OCI-LY7 (cell line): ENCODE measurements at regions of chr4 and their contacts with region 1.

Region 1: DNA sequence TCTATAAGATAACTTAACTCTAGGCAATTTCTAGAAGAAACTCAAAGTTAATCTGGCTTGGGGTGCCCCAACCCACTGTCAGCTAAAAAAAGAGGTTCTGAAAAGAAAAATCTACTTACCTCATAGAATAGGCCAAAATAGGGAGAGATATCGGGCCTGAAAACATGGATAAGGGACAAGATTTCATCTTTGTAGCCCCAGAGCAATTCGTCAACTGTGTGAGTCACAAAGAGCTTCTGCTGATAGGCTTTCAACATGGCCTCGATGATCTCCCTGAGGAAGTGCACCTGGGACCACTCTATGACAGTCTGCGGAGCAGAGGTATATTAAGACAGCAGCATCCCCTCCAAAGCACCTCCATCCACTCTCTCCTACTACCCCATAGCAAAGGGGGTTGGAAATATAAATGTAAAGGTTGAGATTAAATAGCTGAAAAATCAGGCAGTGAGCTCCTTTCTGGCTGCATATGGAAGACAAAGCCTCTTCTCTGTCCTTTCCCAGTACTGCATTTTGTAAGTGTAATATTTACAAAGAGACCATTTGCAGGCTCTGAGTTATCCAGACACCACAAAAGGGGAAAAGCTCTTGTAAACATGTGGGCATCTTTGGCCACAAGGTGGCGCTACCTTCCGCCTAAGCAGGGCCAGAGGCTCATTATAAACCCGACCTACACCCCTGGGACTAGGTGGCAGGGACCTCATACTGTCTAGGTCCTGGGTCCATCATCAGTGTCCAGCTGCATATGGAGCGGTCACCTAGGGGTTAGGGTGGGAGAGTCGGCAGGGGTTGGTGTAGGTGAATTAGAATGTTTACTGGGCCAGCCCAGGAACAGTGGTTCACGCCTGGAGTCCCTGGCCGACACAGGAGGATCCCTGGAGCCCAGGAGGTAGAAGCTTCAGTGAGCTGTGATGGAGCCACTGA is 31.5 kb upstream of the NUP54 start:
- DNase-seq: peak; percentile 80
- H3K4me3 ChIP-seq: no peak overlapping the region
- H3K27ac ChIP-seq: no peak overlapping the region
- H3K4me1 ChIP-seq: no peaks in the 10 kb centered on the region
- CTCF ChIP-seq: peak; percentile 94

Region 2: GRCh38 chr4:75623026-75623425 is 556.6 kb before region 1 on chr4:
- CTCF ChIA-PET with region 1: no interaction called
- POLR2A ChIA-PET with region 1: no interaction called
- intact Hi-C with region 1: no loop called
- DNase-seq: no peak
- H3K4me3 ChIP-seq: no peak overlapping the region
- H3K27ac ChIP-seq: no peak overlapping the region
- H3K4me1 ChIP-seq: no peaks in the 10 kb centered on the region
- CTCF ChIP-seq: no peak

Region 3: GRCh38 chr4:76377911-76378310 is 198.3 kb after region 1 on chr4:
- CTCF ChIA-PET with region 1: no interaction called
- POLR2A ChIA-PET with region 1: interaction called, 3 read pairs
- intact Hi-C with region 1: loop called (anchors 5 kb)
- DNase-seq: peak; percentile 4
- H3K4me3 ChIP-seq: no peak overlapping the region
- H3K27ac ChIP-seq: no peak overlapping the region
- H3K4me1 ChIP-seq: no peaks in the 10 kb centered on the region
- CTCF ChIP-seq: peak; percentile 69

Region 4: GRCh38 chr4:76504613-76505465 is 325.2 kb after region 1 on chr4:
- CTCF ChIA-PET with region 1: interaction called, 3 read pairs
- POLR2A ChIA-PET with region 1: no interaction called
- intact Hi-C with region 1: loop called (anchors 1 kb)
- DNase-seq: peak; percentile 32
- H3K4me3 ChIP-seq: no peak overlapping the region
- H3K27ac ChIP-seq: no peak overlapping the region
- H3K4me1 ChIP-seq: no peaks in the 10 kb centered on the region
- CTCF ChIP-seq: peak; percentile 84

Region 5: DNA sequence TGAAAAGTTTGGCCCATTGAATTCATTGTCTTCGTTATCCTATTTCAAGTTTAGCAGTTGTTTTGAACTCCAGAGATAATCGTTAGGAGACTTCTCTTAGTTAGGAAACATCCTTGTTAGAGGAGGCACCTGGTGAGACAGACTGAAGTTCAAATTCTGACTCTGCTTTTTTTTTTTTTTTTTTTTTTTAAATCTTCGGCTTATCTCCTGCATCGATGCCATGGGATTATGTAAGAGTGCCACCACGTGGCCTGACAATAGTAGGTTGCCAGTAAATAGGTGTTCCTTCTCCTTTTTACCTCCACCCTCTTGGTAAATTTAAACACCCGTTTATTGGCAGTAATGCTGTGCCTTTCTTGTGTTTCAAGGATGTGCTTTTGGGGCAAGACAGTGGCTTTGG is 569.0 kb after region 1 on chr4:
- CTCF ChIA-PET with region 1: no interaction called
- POLR2A ChIA-PET with region 1: no interaction called
- intact Hi-C with region 1: loop called (anchors 10 kb)
- DNase-seq: peak; percentile 9
- H3K4me3 ChIP-seq: no peak overlapping the region
- H3K27ac ChIP-seq: no peak overlapping the region
- H3K4me1 ChIP-seq: no peaks in the 10 kb centered on the region
- CTCF ChIP-seq: peak; percentile 59